ENCODE measurements at regions of chr6 and their contacts with region 1.

Region 1: DNA sequence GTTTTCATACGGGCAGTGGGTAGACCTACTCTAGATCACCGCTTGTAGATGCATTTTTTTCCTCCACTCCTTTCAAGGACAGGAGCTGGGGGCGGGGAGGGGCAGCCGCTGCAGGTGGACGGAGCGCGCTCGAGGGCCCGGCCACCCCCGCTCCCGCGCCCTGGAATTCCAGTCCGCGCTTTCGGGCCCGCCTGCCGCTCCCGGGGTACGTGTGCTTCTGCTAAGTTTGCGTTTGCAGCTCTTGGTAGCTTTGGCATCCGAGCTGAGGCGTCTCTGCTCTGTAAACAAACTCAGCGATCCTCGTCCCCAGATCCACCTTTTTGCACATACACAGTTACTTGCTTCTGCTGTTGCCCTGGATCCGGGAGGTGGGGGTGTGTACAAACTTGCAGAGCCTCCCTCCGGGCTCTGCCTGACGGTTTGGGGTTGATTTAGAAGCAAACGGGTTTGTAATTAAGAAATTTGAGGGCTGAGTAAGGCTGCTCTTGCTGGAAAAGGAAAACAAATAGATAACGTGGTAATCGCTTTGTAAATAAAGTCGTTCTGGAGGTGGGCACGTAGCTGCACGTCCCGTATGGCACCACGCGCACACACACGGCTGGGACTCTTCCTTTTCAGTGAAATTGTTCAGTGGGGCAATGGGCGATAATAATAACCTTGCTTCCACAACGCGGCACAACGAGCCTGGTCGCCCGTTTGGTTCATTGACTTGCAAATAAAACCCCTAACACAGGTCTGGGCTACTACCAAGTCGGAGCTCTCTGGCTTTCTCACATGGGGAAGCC is 976 bp upstream of the CITED2 start:
- DNase-seq: peak; percentile 87
- ATAC-seq: peak; percentile 58
- H3K4me3 Mint-ChIP-seq: peak overlapping the region; percentile 86
- H3K27ac Mint-ChIP-seq: peak overlapping the region; percentile 98
- H3K4me1 Mint-ChIP-seq: peaks cover 34% of the 10 kb centered on the region
- H3K27me3 Mint-ChIP-seq: no peaks in the 10 kb centered on the region
- CTCF ChIP-seq: no peak

Region 2: GRCh38 chr6:139173172-139173571 is 202.3 kb before region 1 on chr6:
- CTCF ChIA-PET with region 1: interaction called, 3 read pairs
- POLR2A ChIA-PET with region 1: interaction called, 10 read pairs
- intact Hi-C with region 1: no loop called
- DNase-seq: peak; percentile 47
- ATAC-seq: peak; percentile 92
- H3K4me3 Mint-ChIP-seq: peak overlapping the region; percentile 31
- H3K27ac Mint-ChIP-seq: peak overlapping the region; percentile 89
- H3K4me1 Mint-ChIP-seq: peaks cover 87% of the 10 kb centered on the region
- H3K27me3 Mint-ChIP-seq: no peaks in the 10 kb centered on the region
- CTCF ChIP-seq: peak; percentile 42

Region 3: DNA sequence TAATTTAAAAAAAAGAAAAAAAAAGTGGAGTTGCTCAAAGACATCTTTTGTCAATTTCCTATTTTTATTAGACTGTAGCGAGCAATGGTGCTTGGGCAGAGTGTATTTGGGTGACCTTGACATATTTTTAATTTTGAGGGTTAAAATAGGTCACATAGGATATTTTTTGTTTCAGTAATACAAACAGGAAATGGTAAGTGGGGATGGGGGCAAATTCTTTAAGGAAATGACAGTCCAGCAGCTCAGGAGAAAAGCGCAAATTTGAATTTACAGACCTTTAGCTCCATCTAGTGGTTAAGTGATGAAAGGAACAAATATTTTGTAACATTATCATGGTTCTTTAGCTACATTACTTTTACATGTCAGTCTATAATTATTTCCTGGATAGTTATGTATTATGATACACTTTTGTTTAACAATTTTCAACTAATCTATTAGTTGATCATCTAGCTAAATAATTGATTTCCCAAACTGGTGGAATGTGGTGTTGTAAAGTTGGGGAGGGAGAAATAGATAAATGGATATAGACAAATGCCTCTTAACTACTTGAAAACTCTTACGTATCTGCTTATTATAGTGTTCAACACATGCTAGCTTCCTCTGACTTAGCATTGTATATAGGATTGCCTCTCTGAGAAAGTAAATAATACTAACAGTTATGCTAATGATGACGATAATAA is 11.0 kb before region 1 on chr6:
- CTCF ChIA-PET with region 1: interaction called, 34 read pairs
- POLR2A ChIA-PET with region 1: interaction called, 4 read pairs
- intact Hi-C with region 1: no loop called
- DNase-seq: no peak
- ATAC-seq: peak; percentile 65
- H3K4me3 Mint-ChIP-seq: no peak overlapping the region
- H3K27ac Mint-ChIP-seq: peak overlapping the region; percentile 48
- H3K4me1 Mint-ChIP-seq: peaks cover 26% of the 10 kb centered on the region
- H3K27me3 Mint-ChIP-seq: no peaks in the 10 kb centered on the region
- CTCF ChIP-seq: peak; percentile 79

Region 4: GRCh38 chr6:139534472-139535115 is 159.2 kb after region 1 on chr6:
- CTCF ChIA-PET with region 1: interaction called, 3 read pairs
- POLR2A ChIA-PET with region 1: interaction called, 12 read pairs
- intact Hi-C with region 1: loop called (anchors 10 kb)
- DNase-seq: no peak
- ATAC-seq: peak; percentile 29
- H3K4me3 Mint-ChIP-seq: peak overlapping the region; percentile 44
- H3K27ac Mint-ChIP-seq: peak overlapping the region; percentile 86
- H3K4me1 Mint-ChIP-seq: peaks cover 27% of the 10 kb centered on the region
- H3K27me3 Mint-ChIP-seq: no peaks in the 10 kb centered on the region
- CTCF ChIP-seq: no peak

Region 5: GRCh38 chr6:139927236-139927635 is 551.8 kb after region 1 on chr6:
- CTCF ChIA-PET with region 1: interaction called, 3 read pairs
- POLR2A ChIA-PET with region 1: no interaction called
- intact Hi-C with region 1: loop called (anchors 5 kb)
- DNase-seq: no peak
- ATAC-seq: no peak
- H3K4me3 Mint-ChIP-seq: no peak overlapping the region
- H3K27ac Mint-ChIP-seq: no peak overlapping the region
- H3K4me1 Mint-ChIP-seq: no peaks in the 10 kb centered on the region
- H3K27me3 Mint-ChIP-seq: peaks cover 8% of the 10 kb centered on the region
- CTCF ChIP-seq: no peak

Measured in activated CD8-positive, alpha-beta T cell treated with anti-CD3 and anti-CD28 coated beads for 36 hours (primary cell).